IMR-90 (cell line): ENCODE measurements at regions of chr15 and their contacts with region 1.

Region 1: GRCh38 chr15:99059010-99059981 is 45.6 kb upstream of the SYNM start:
- DNase-seq: peak; percentile 87
- ATAC-seq: peak; percentile 99
- H3K4me3 ChIP-seq: peak overlapping the region; percentile 47
- H3K27ac ChIP-seq: peak overlapping the region; percentile 82
- H3K4me1 ChIP-seq: peaks cover 3% of the 10 kb centered on the region
- H3K27me3 ChIP-seq: no peaks in the 10 kb centered on the region
- CTCF ChIP-seq: peak; percentile 96
- POLR2A ChIP-seq: peak; percentile 58
- RAD21 ChIP-seq: peak; percentile 84

Region 2: DNA sequence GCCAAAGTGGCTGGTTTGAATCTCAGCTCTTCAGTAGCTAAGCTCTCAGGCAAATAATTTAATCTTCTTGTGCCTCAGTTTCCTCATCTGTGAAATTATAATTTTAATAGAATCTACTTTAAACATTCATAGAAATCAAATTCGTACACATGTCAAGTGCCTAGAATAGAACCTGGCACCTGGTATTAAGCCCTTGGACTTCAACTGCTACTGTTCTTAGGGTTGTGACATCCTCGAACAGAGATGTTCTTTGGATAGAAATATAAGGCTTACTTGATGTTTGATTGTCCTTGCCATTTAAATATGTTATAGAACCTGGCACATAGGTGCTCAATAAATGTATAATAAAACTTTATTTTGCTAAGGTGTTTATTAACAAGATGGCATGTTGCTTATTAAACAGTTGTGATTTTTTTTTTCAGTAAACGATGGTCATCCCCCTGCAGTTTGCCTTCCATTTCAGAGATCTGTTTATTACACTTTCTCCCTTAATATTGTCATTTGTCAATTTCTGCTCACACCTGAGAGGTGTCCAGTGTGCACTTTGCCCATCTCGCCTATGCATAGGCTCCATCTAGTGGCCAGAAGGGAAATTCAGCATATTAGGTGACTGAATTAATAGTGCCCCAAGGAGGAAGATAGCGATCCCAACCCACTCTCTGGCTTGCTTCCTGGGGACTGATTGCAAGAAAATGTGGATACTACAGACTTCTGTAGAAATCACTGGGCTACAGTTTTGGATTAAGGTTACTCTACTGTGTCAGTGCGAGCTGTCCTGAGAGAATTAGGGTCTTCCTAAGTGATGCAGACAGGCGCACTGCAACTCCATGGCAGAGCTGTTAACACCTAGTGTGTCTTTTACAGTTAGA is 400.2 kb before region 1 on chr15:
- CTCF ChIA-PET with region 1: no interaction called
- POLR2A ChIA-PET with region 1: no interaction called
- dilution Hi-C with region 1: no loop called
- in situ Hi-C with region 1: no loop called
- intact Hi-C with region 1: no loop called
- DNase-seq: peak; percentile 60
- ATAC-seq: peak; percentile 84
- H3K4me3 ChIP-seq: no peak overlapping the region
- H3K27ac ChIP-seq: no peak overlapping the region
- H3K4me1 ChIP-seq: peaks cover 20% of the 10 kb centered on the region
- H3K27me3 ChIP-seq: no peaks in the 10 kb centered on the region
- CTCF ChIP-seq: peak; percentile 74
- POLR2A ChIP-seq: no peak
- RAD21 ChIP-seq: peak; percentile 64

Region 3: GRCh38 chr15:98896802-98897732 is 162.2 kb before region 1 on chr15:
- CTCF ChIA-PET with region 1: no interaction called
- POLR2A ChIA-PET with region 1: no interaction called
- dilution Hi-C with region 1: no loop called
- in situ Hi-C with region 1: no loop called
- intact Hi-C with region 1: loop called (anchors 1 kb)
- DNase-seq: peak; percentile 100
- ATAC-seq: peak; percentile 76
- H3K4me3 ChIP-seq: no peak overlapping the region; the same call in 1 of the 2 replicates
- H3K27ac ChIP-seq: peak overlapping the region; percentile 98
- H3K4me1 ChIP-seq: peaks cover 48% of the 10 kb centered on the region
- H3K27me3 ChIP-seq: no peaks in the 10 kb centered on the region
- CTCF ChIP-seq: no peak
- POLR2A ChIP-seq: peak; percentile 52
- RAD21 ChIP-seq: peak; percentile 30; the same call in 1 of the 2 replicates

Region 4: DNA sequence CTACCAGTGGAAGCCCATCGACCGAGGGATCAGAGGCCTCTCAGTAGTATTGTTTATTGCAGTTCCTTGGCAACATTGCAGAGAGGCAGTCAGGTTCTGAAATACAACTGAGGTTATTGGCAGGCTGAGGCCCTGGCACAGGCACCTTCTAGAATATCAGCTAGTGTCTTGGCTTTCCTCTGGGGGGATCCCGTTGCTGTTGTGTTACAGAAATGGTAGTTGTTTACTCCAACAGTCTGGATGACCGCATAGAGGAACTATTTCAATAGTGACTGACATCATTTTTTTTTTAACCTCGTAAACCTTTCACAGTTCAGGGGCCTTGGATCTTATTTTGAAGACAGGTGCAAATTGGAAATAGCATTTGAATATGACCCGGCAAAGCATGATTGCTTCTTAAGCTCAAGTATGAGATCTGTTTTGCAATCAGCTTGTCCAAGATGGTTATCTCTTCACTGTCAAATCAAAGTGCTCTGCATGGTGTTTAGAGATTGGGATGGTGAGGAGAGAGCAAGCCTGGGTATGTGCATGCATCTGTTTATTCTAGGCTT is 115.6 kb before region 1 on chr15:
- CTCF ChIA-PET with region 1: no interaction called
- POLR2A ChIA-PET with region 1: no interaction called
- dilution Hi-C with region 1: loop called (anchors 25 kb)
- in situ Hi-C with region 1: no loop called
- intact Hi-C with region 1: loop called (anchors 5 kb)
- DNase-seq: peak; percentile 65
- ATAC-seq: peak; percentile 76
- H3K4me3 ChIP-seq: no peak overlapping the region
- H3K27ac ChIP-seq: peak overlapping the region; percentile 24
- H3K4me1 ChIP-seq: peaks cover 17% of the 10 kb centered on the region
- H3K27me3 ChIP-seq: no peaks in the 10 kb centered on the region
- CTCF ChIP-seq: no peak
- POLR2A ChIP-seq: no peak
- RAD21 ChIP-seq: peak; percentile 9; the same call in 1 of the 2 replicates

Region 5: DNA sequence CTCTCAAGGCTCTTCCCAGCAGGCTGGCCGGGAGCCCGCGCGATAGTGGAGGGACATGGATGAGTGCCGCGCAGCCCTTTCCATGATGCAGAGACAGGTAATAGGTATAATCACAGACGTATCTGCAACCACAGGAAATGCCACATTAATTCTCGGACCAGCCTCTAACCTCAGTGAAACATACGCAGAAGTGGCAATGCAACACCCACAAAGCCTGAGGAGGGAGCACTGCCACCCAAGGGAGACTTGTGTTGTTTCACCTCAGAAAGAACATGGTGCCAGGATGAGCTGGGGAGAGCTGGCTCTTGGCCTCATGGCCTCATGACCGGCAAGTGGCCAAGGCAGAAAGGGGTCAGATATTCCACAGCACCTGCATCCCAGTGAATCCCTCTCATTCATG is 90.7 kb before region 1 on chr15:
- CTCF ChIA-PET with region 1: no interaction called
- POLR2A ChIA-PET with region 1: no interaction called
- dilution Hi-C with region 1: no loop called
- in situ Hi-C with region 1: no loop called
- intact Hi-C with region 1: no loop called
- DNase-seq: no peak
- ATAC-seq: no peak
- H3K4me3 ChIP-seq: no peak overlapping the region
- H3K27ac ChIP-seq: no peak overlapping the region
- H3K4me1 ChIP-seq: peaks cover 11% of the 10 kb centered on the region
- H3K27me3 ChIP-seq: no peaks in the 10 kb centered on the region
- CTCF ChIP-seq: no peak
- POLR2A ChIP-seq: no peak
- RAD21 ChIP-seq: no peak